ENCODE measurements at regions of chr17 and their contacts with region 1.

Region 1: GRCh38 chr17:56819431-56820145 is 14.1 kb downstream of the C17orf67 start:
- DNase-seq: no peak
- H3K4me3 ChIP-seq: no peak overlapping the region
- CTCF ChIP-seq: peak; percentile 74

Region 2: DNA sequence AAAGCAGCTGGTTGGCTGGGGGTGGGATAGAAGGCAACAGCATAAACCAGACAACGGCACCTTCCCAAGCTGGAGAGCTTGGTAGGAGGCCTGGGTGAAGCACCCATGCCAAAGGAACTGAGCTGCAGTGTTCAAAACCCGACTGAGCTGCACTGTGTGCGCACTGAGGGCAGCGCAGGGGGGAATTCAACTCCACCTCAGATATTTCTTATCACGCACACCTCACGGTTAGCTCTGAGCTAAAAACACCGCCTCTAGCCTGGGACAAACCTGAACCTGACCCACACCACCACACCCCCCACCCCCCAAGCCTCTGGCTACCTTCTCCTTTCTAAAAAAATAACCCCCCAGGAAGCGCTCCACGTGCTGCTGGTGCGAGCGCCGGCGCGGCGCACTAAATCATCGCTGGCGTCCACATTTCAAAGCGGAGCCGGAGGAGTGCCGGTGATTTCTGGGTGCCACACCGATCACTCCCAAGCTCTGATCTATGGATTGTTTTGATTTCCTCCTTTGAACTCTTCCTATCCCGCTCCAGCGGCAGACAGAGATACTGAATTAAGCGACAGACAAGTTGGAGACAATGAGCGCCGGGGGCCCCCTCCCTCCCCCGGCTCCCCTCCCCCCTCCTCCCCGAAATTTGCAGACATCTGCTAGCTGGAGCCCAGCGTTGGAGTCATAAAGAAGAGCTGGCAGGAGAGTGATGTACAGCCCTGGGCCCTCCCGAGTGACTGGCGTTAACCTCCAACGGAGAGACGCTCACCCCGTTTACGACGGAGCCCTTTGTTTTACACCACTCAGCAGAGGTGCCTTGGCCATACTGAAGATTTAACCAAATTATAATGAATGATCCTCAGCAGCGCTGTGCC is 141.1 kb before region 1 on chr17:
- CTCF ChIA-PET with region 1: no interaction called
- POLR2A ChIA-PET with region 1: no interaction called
- DNase-seq: no peak
- H3K4me3 ChIP-seq: peak overlapping the region; percentile 2
- CTCF ChIP-seq: no peak

Region 3: DNA sequence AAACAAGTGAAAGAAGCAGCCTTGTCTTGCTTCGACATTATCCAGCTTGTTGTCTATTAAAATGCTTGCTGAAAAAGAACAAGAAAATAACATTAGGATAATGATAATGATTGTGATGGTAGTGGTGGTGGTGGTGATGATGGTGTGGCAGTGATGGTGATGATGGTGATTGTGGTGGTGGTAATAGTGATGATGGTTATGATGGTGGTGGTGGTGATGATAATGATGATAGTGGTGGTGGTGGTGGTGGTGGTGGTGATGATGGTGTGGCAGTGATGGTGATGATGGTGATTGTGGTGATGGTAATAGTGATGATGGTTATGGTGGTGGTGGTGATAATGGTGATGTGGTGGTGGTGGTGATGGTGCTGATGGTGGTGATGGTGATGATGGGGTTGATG is 27.3 kb before region 1 on chr17:
- CTCF ChIA-PET with region 1: interaction called, 11 read pairs
- POLR2A ChIA-PET with region 1: no interaction called
- DNase-seq: no peak
- H3K4me3 ChIP-seq: no peak overlapping the region
- CTCF ChIP-seq: no peak

Region 4: DNA sequence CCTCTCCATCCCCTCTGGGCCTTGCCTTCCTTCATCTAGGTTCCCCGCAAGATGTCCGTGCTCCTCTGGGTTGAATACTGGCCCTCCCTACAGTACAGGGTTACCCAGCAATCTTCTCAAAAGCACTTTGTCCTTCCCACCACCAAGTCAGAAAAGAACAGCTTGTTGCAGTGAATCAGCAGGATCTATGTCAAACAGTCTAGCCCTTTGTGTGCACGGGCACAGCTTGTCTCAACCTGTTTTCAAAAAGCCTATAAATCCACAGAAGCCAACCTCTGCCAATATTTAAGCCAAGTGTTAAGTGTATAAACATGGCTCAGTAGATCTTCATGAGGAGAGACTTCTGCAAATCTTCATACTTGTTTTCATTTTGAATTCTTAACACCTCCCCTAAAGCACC is 11.1 kb before region 1 on chr17:
- CTCF ChIA-PET with region 1: interaction called, 17 read pairs
- POLR2A ChIA-PET with region 1: no interaction called
- DNase-seq: no peak
- H3K4me3 ChIP-seq: no peak overlapping the region
- CTCF ChIP-seq: no peak

Region 5: GRCh38 chr17:56838687-56839086 is 19.1 kb after region 1 on chr17:
- CTCF ChIA-PET with region 1: interaction called, 19 read pairs
- POLR2A ChIA-PET with region 1: interaction called, 3 read pairs
- DNase-seq: no peak
- H3K4me3 ChIP-seq: no peak overlapping the region
- CTCF ChIP-seq: no peak

Region 6: GRCh38 chr17:56934282-56934681 is 114.7 kb after region 1 on chr17:
- CTCF ChIA-PET with region 1: interaction called, 258 read pairs
- POLR2A ChIA-PET with region 1: no interaction called
- DNase-seq: no peak
- H3K4me3 ChIP-seq: no peak overlapping the region
- CTCF ChIP-seq: no peak

Region 7: DNA sequence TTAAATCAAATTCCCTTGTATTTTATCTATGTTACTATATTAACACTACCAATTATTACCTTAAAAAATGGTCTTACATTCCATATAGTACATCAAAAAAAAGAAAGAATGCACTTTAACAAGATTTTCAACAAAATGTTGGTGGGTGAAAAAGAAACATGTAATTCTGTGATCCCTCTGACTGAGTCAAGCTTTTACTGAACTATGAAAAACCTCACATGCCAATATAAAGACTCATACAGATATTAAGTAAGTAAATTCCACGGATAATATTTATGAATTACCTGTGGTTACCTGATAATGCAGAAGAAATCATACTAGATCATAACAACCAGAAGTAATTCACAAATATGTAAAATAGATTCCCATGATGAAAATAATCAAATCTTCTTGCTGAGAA is 128.9 kb after region 1 on chr17:
- CTCF ChIA-PET with region 1: interaction called, 258 read pairs
- POLR2A ChIA-PET with region 1: no interaction called
- DNase-seq: no peak
- H3K4me3 ChIP-seq: no peak overlapping the region
- CTCF ChIP-seq: no peak

Region 8: DNA sequence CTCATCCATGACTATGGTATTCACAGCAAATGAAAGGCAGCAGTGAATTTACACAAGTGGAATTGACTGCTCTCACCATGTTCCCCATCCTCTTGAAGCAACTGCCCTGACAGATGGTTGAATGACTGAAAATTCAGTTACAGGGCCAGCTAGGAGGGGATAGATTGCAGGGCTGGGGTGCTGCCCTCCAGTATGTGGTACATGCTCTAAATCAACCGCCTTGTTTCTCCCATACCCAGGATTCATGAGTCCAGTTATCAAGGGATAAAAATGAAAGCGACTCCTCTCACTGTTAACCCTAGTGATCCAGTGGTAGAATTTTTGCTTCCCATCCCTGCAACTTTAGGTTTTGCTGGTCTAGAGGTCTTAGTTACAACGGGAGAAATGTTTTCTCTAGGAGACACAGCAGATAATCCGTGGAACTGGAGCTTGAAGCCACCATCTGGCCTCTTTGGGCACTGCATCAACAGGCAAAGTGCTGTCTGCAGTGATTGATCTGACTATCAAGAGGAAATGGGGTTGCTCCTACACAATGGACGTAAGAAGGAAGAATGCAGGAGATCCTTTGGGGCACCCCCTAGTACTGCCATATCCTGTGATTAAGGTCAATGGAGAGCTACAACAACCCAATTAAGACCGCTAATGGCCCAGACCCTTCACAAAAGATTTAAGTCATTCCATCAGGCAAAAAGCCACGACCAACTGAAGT is 190.3 kb after region 1 on chr17:
- CTCF ChIA-PET with region 1: interaction called, 10 read pairs
- POLR2A ChIA-PET with region 1: no interaction called
- DNase-seq: no peak
- H3K4me3 ChIP-seq: no peak overlapping the region
- CTCF ChIP-seq: peak; percentile 75

Region 9: GRCh38 chr17:57284984-57285646 is 465.5 kb after region 1 on chr17:
- CTCF ChIA-PET with region 1: no interaction called
- POLR2A ChIA-PET with region 1: no interaction called
- DNase-seq: no peak
- H3K4me3 ChIP-seq: no peak overlapping the region
- CTCF ChIP-seq: no peak

Measured in AG04449 (cell line).